Mammary epithelial cell (primary cell): ENCODE measurements at regions of chr2 and their contacts with region 1.

Region 1: GRCh38 chr2:207769597-207770486 is at the start of gene FZD5:
- DNase-seq: peak; percentile 91
- H3K4me3 ChIP-seq: peak within 1 kb of the TSS; percentile 67 to 76 (median 75)
- H3K27ac ChIP-seq: peak within 1 kb of the TSS; percentile 28
- H3K4me1 ChIP-seq: peaks cover 9% of the 10 kb centered on the region
- H3K27me3 ChIP-seq: no peaks in the 10 kb centered on the region
- CTCF ChIP-seq: peak; percentile 36 to 60
- total RNA-seq, gene FZD5: 4.4 to 8.7 TPM

Region 2: GRCh38 chr2:207847807-207848544 is 78.1 kb after region 1 on chr2:
- CTCF ChIA-PET with region 1: no interaction called
- dilution Hi-C with region 1: no loop called
- in situ Hi-C with region 1: no loop called
- intact Hi-C with region 1: loop called (anchors 2 kb)
- DNase-seq: peak; percentile 89
- H3K4me3 ChIP-seq: no peak overlapping the region
- H3K27ac ChIP-seq: no peak overlapping the region
- H3K4me1 ChIP-seq: peaks cover 20% of the 10 kb centered on the region
- H3K27me3 ChIP-seq: no peaks in the 10 kb centered on the region
- CTCF ChIP-seq: no peak

Region 3: GRCh38 chr2:208025037-208025813 is 255.4 kb after region 1 on chr2 and contains the start of gene PLEKHM3:
- CTCF ChIA-PET with region 1: no interaction called
- dilution Hi-C with region 1: no loop called
- in situ Hi-C with region 1: loop called in 1 of 2 experiments (anchors 10 kb)
- intact Hi-C with region 1: loop called (anchors 1 kb)
- DNase-seq: peak; percentile 81
- H3K4me3 ChIP-seq: peak within 1 kb of the TSS; percentile 63 to 87 (median 84)
- H3K27ac ChIP-seq: peak within 1 kb of the TSS; percentile 71
- H3K4me1 ChIP-seq: peaks cover 7% of the 10 kb centered on the region
- H3K27me3 ChIP-seq: no peaks in the 10 kb centered on the region
- CTCF ChIP-seq: no peak
- total RNA-seq, gene PLEKHM3: 6.4 to 15.0 TPM

Region 4: GRCh38 chr2:208072250-208072892 is 302.5 kb after region 1 on chr2:
- CTCF ChIA-PET with region 1: no interaction called
- dilution Hi-C with region 1: loop called (anchors 25 kb)
- in situ Hi-C with region 1: no loop called
- intact Hi-C with region 1: loop called (anchors 1 kb)
- DNase-seq: peak; percentile 43
- H3K4me3 ChIP-seq: no peak overlapping the region
- H3K27ac ChIP-seq: no peak overlapping the region
- H3K4me1 ChIP-seq: no peaks in the 10 kb centered on the region
- H3K27me3 ChIP-seq: no peaks in the 10 kb centered on the region
- CTCF ChIP-seq: peak; percentile 70 to 87